Right ventricle myocardium superior (tissue), 1 donor: ENCODE measurements at regions of chr9 and their contacts with region 1.

Region 1: DNA sequence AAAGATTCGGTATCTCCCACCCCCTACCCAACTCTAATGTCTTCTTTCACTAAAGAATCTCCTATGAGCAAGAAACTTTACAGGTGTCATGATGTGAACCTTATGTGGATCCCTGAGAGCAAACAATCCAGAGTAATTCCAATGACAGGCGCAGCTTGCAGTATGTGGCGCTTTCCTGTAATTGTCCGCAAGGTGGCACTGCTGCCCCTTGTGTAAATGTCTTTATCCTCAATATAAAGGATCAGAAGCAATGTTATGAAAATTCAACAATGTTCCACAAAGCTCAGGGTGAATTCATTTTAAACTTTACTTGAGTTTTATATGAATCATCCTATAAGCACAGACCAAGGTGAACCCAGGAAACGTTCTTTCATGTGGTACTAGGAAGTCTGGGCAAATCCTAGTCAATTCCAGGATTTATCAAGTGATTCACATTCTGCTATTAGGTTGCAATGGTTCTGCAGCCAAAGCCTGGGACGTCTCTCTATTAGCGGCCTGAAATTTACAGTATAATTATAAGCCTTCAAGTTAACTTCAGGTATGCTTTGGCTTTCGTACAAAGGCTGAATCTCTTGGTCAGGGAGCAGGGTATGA is 113.7 kb downstream of the TRPM6 start:
- DNase-seq: peak; percentile 80
- ATAC-seq: peak; percentile 90

Region 2: GRCh38 chr9:74379718-74380117 is 394.3 kb before region 1 on chr9:
- intact Hi-C with region 1: no loop called
- DNase-seq: no peak
- ATAC-seq: no peak

Region 3: DNA sequence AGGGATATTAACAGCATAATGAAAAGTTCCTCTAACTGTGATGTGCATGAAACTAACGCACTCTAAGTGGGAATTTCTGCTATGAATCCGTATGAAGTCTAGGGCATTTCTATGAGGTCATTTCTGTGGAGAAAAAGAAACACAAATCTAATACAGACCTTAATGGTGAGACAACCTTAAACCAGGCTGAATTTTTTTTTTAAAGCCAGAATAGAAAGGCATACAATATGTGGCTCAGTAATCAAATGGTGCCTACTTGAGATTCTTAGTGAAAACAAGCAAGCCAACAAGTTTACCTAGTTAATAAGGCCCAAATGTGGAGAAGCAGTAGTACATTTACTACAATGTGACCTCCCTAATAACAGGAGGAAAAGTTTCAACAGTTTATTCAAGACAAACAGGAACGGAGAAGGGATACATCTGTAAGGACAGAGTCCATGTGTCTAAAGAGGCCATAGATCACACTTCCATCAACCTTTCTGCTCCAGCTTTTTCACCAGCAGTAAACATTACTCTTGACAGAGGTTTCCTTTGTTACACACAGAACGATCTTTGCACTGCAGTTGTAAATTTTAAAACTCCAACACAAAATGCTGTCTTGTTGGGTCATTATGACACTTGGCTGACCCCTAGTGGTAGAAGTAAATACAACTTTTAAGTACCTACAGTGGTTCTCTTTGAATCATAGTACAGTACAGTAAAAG is 227.9 kb after region 1 on chr9:
- intact Hi-C with region 1: loop called (anchors 2 kb)
- DNase-seq: no peak
- ATAC-seq: peak; percentile 92